ENCODE measurements at regions of chr12 and their contacts with region 1.

Region 1: GRCh38 chr12:120686690-120687577 is at the start of gene MLEC:
- DNase-seq: peak; percentile 98
- ATAC-seq: peak; percentile 77
- H3K4me3 Mint-ChIP-seq: peak within 1 kb of the TSS; percentile 91
- H3K27ac Mint-ChIP-seq: peak within 1 kb of the TSS; percentile 97
- H3K4me1 Mint-ChIP-seq: peaks cover 43% of the 10 kb centered on the region
- H3K27me3 Mint-ChIP-seq: no peaks in the 10 kb centered on the region
- CTCF ChIP-seq: no peak
- total RNA-seq, gene MLEC: 60.6 and 69.6 TPM in 2 replicates

Region 2: DNA sequence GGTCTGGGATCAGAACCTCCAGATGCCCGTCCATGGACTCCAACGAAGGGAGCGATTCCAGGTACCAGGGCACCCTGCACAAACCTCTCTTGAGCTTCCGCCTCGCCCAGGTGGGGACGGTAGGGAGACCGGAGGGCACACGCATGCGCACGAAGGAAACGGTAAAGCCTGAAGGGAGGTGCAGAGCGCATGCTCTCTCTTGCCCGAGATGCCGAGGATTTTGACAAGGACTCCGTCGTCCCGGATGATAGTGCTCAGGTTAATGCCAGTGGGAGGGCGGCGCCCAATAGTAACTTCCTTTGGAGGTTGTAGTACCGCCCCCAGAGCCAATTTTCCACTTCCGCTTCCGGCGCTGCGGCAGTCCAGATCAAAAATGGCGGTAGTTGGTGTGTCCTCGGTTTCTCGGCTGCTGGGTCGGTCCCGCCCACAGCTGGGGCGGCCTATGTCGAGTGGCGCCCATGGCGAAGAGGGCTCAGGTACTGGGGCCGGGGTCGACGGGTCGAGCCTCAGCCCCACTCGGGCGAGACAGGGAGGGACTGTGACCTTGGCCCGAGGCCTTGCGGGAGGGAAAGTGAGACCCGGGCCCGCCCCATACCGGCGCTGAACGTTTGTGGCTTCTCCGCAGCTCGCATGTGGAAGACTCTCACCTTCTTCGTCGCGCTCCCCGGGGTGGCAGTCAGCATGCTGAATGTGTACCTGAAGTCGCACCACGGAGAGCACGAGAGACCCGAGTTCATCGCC is 249.0 kb before region 1 on chr12 and contains the start of gene COX6A1:
- CTCF ChIA-PET with region 1: no interaction called
- POLR2A ChIA-PET with region 1: no interaction called
- intact Hi-C with region 1: loop called (anchors 2 kb)
- DNase-seq: peak; percentile 87
- ATAC-seq: peak; percentile 96
- H3K4me3 Mint-ChIP-seq: peak within 1 kb of the TSS; percentile 97
- H3K27ac Mint-ChIP-seq: peak within 1 kb of the TSS; percentile 89
- H3K4me1 Mint-ChIP-seq: peaks cover 29% of the 10 kb centered on the region
- H3K27me3 Mint-ChIP-seq: peaks cover 4% of the 10 kb centered on the region
- CTCF ChIP-seq: no peak
- total RNA-seq, gene COX6A1: 255 and 292 TPM in 2 replicates

Region 3: GRCh38 chr12:120649442-120650232 is 37.3 kb before region 1 on chr12:
- CTCF ChIA-PET with region 1: interaction called, 63 read pairs
- POLR2A ChIA-PET with region 1: interaction called, 59 read pairs
- intact Hi-C with region 1: loop called (anchors 1 kb)
- DNase-seq: no peak
- ATAC-seq: no peak
- H3K4me3 Mint-ChIP-seq: peak overlapping the region; percentile 75
- H3K27ac Mint-ChIP-seq: peak overlapping the region; percentile 44
- H3K4me1 Mint-ChIP-seq: peaks cover 26% of the 10 kb centered on the region
- H3K27me3 Mint-ChIP-seq: peaks cover 48% of the 10 kb centered on the region
- CTCF ChIP-seq: peak; percentile 50

Region 4: DNA sequence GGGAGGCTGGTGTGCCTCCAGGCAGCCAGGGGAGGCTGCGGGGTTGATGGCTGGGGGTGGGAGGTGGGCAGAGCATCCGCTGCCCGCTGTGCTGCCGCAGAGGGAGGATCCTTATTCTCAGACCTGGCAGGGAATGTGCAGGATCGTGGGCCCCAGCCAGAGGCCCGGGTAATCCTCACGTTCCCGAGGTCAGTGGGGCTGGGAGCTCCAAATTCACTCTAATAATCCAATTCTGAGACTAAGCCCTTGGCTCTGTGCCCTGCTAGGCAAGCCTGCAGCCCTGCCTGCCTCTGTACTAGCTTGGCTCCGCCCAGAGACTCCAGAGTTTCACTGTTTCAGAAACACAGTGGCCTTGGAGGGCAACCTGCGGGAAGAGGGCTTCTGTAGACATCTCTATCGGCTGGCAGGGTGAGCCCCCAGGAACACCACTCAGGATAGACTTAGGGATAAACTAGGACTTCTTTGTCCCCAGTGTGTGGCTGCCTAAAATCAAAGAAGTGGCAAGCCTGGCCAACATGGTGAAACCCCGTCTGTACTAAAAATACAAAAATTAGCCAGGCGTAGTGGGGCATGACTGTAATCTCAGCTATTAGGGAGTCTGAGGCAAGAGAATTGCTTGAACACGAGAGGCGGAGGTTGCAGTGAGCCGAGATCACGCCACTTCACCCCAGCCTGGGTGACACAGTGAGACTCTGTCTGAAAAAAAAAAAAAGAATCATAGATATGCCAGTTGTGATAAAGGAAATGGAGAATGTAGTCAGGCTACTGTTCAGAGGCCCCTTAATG is 17.7 kb before region 1 on chr12:
- CTCF ChIA-PET with region 1: interaction called, 6 read pairs
- POLR2A ChIA-PET with region 1: interaction called, 55 read pairs
- intact Hi-C with region 1: loop called (anchors 1 kb)
- DNase-seq: peak; percentile 43
- ATAC-seq: peak; percentile 79
- H3K4me3 Mint-ChIP-seq: peak overlapping the region; percentile 74
- H3K27ac Mint-ChIP-seq: peak overlapping the region; percentile 89
- H3K4me1 Mint-ChIP-seq: peaks cover 80% of the 10 kb centered on the region
- H3K27me3 Mint-ChIP-seq: peaks cover 5% of the 10 kb centered on the region
- CTCF ChIP-seq: no peak

Region 5: GRCh38 chr12:120725659-120726509 is 39.0 kb after region 1 on chr12 and contains the start of gene ACADS:
- CTCF ChIA-PET with region 1: no interaction called
- POLR2A ChIA-PET with region 1: no interaction called
- intact Hi-C with region 1: loop called (anchors 1 kb)
- DNase-seq: peak; percentile 92
- ATAC-seq: peak; percentile 99
- H3K4me3 Mint-ChIP-seq: peak within 1 kb of the TSS; percentile 86
- H3K27ac Mint-ChIP-seq: peak within 1 kb of the TSS; percentile 70
- H3K4me1 Mint-ChIP-seq: peaks cover 28% of the 10 kb centered on the region
- H3K27me3 Mint-ChIP-seq: no peaks in the 10 kb centered on the region
- CTCF ChIP-seq: no peak
- total RNA-seq, gene ACADS: 9.4 and 11.1 TPM in 2 replicates

Region 6: GRCh38 chr12:120791669-120792176 is 104.8 kb after region 1 on chr12:
- CTCF ChIA-PET with region 1: no interaction called
- POLR2A ChIA-PET with region 1: no interaction called
- intact Hi-C with region 1: no loop called
- DNase-seq: no peak
- ATAC-seq: no peak
- H3K4me3 Mint-ChIP-seq: no peak overlapping the region
- H3K27ac Mint-ChIP-seq: peak overlapping the region; percentile 24
- H3K4me1 Mint-ChIP-seq: peaks cover 23% of the 10 kb centered on the region
- H3K27me3 Mint-ChIP-seq: no peaks in the 10 kb centered on the region
- CTCF ChIP-seq: no peak

Region 7: DNA sequence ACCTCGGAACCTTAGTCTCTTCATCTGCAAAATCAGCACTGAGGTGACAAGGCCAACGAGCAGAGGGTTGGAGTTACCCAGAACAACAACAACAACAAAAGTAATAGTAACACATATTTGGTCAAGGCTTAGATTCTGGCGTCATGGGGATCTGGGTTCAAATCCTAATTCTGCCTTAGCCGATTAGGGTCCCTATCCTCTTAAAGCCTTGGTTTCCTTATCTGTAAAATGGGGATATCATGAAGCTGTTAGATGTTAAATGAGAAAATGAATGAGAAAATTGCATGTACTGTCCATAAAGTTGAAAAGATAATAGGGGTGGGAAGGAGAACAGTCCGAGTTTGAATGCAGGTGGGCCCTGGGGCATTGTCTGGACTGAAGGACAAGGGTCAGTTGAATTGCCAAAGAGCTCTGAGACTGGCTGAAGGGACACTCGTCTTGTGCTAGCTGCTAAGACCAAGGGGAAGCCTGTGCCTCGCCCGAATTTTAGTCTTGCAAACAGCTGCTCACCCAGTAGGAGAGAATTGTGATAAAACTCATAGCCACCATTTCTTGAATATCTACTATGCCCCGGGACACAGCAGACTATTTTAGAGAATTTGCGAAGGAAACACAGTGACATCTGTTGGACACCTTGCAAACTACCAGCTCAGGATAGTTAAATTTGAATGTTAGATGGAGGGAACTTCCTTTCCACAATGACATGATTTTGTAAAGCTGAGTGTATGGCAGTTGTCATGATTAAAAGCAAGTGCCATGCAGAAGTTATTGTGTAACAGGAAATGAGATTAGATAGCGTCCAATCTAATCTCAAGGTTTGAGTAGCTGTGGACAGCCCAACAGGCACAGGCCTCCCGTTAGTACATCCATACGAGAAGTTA is 284.6 kb after region 1 on chr12:
- CTCF ChIA-PET with region 1: interaction called, 6 read pairs
- POLR2A ChIA-PET with region 1: interaction called, 3 read pairs
- intact Hi-C with region 1: loop called (anchors 1 kb)
- DNase-seq: no peak
- ATAC-seq: peak; percentile 94
- H3K4me3 Mint-ChIP-seq: no peak overlapping the region
- H3K27ac Mint-ChIP-seq: no peak overlapping the region
- H3K4me1 Mint-ChIP-seq: peaks cover 8% of the 10 kb centered on the region
- H3K27me3 Mint-ChIP-seq: peaks cover 3% of the 10 kb centered on the region
- CTCF ChIP-seq: no peak

Measured in activated B cell treated with CpG ODN at 0.5 μM for 24 hours (primary cell).